Activated B cell treated with CpG ODN at 0.5 μM for 24 hours (primary cell): ENCODE measurements at regions of chr19 and their contacts with region 1.

Region 1: DNA sequence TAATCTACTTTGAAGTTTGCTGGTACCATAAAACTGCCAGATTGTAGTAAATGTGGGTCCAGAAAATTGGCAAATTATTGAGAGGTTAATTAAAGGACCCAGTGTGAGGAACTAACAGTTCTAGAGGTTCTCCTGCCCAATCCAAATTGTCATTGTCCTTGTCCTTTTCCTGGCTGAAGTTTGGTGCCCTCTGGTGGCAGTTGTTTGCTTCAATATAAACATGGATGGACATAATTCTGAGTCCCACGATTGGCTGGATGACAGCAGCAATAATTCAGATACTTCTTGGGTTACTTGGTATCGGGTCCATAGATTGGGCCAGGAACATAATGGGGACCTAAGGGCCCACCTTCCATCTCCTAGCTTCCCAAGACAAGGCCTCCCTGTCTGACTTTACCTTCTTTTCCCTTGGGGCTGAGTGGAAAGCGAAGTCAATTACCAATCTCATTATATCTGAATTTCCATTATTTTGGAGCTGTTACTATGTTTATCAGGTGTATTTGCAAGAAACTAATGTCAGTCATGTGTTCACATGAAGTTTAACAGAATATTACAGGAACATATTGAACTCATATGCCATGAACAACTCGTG is 33.8 kb upstream of the GARRE1 start:
- DNase-seq: peak; percentile 20
- ATAC-seq: no peak
- H3K4me3 Mint-ChIP-seq: no peak overlapping the region
- H3K27ac Mint-ChIP-seq: peak overlapping the region; percentile 50
- H3K4me1 Mint-ChIP-seq: peaks cover 35% of the 10 kb centered on the region
- H3K27me3 Mint-ChIP-seq: no peaks in the 10 kb centered on the region
- CTCF ChIP-seq: peak; percentile 14

Region 2: DNA sequence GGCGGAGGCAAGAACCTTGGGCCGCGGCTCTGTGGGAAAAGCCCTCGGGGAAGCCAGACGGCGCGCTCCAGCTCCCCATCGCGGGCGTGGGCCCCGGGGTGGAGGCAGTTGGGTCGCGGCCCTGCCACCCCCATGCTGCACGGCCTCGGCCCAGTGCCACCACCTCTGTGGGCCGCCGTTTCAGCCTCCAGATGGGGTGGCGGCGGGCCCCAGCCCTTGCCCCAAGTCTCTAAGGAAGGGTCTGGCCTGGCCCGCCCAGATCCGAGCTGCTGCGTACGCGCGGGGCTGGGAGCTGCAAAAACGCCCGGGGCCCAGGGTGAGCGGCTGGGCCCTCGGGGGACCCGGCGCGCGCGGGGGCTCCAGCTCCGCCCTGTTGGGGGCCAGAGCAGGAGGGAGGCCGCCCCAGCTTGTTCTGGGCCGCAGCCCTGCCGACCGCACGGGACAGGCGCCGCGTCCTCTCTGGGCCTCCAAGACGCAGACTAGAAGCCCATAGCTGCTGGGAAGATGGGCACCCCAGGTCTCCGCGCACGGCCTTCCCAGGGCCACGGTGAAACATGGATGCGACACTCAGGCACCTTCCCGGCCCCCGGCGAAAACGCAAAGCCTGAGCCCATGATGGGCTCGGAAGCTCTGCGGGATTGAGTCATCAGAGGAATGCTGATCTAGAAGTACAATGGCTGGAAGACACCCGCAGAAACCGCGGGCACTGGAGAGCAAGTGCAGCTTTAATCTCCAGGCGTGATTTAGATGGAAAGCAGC is 313.8 kb before region 1 on chr19:
- CTCF ChIA-PET with region 1: no interaction called
- POLR2A ChIA-PET with region 1: no interaction called
- intact Hi-C with region 1: no loop called
- DNase-seq: no peak
- ATAC-seq: peak; percentile 31
- H3K4me3 Mint-ChIP-seq: peak overlapping the region; percentile 58
- H3K27ac Mint-ChIP-seq: no peak overlapping the region
- H3K4me1 Mint-ChIP-seq: peaks cover 12% of the 10 kb centered on the region
- H3K27me3 Mint-ChIP-seq: peaks cover 38% of the 10 kb centered on the region
- CTCF ChIP-seq: no peak

Region 3: DNA sequence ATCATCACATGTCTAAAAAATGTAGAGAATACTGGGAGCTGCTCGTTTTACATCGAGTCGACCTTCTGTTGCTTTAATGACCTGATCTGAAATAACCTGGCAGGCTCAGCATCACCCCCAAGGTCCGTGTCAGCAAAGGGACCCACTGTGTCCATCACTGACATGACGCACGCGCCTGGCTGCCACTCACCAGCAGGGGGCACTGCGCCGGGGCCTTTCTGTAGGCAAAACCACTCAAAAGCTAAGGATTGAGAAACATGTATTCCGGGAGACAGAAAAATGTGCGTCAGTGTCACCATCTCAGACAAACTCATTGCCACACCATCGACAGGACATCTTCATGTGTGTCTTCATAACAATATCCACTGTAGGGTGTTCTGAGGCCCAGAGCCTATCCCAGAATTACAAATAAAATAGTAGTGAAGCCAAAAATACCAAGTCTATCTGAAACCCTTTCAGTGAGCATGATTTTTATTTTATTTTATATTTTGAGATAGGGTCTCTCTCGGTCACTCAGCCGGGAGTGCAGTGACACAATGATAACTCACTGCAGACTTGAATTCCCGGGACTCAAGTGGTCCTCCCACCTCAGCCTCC is 178.5 kb before region 1 on chr19:
- CTCF ChIA-PET with region 1: no interaction called
- POLR2A ChIA-PET with region 1: no interaction called
- intact Hi-C with region 1: loop called (anchors 5 kb)
- DNase-seq: peak; percentile 25
- ATAC-seq: no peak
- H3K4me3 Mint-ChIP-seq: no peak overlapping the region
- H3K27ac Mint-ChIP-seq: no peak overlapping the region
- H3K4me1 Mint-ChIP-seq: no peaks in the 10 kb centered on the region
- H3K27me3 Mint-ChIP-seq: peaks cover 17% of the 10 kb centered on the region
- CTCF ChIP-seq: no peak

Region 4: DNA sequence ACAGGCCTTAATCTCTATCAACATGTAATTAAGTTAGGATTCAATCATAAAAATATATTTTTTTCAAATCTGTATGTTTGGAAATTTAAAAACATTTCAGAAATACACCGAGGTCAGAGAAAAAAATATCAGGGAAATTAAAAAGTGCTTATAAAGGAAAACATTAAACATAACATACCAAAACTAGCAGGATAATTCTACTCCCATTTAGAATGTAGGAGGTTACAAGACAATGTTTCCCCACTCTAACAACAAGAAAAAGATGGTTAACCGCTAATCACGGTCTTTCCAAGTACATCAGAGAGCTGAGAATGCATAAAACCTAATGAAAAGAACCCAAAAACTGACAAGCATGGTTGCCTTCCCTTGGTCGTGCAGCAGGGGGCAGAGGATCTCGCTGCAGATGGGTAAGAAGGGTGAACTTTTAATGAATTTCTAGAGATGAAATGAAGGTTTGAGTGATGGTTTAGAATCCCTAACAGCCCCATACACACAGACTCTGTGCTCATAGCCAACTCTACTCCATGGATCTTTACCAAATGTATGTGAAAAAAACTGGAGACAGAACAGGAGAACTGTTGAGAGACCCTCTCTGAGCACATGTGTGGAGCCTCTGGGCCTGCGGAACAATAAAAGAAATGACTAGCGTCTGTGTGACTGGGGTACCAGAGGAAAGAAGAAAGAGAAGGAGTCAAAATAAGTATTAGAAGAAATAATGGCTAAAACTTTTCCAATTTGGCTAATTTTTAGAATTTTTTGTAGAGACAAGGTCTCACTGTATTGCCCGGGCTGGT is 99.5 kb before region 1 on chr19:
- CTCF ChIA-PET with region 1: interaction called, 4 read pairs
- POLR2A ChIA-PET with region 1: no interaction called
- intact Hi-C with region 1: loop called (anchors 1 kb)
- DNase-seq: no peak
- ATAC-seq: peak; percentile 56
- H3K4me3 Mint-ChIP-seq: no peak overlapping the region
- H3K27ac Mint-ChIP-seq: no peak overlapping the region
- H3K4me1 Mint-ChIP-seq: no peaks in the 10 kb centered on the region
- H3K27me3 Mint-ChIP-seq: peaks cover 12% of the 10 kb centered on the region
- CTCF ChIP-seq: no peak

Region 5: DNA sequence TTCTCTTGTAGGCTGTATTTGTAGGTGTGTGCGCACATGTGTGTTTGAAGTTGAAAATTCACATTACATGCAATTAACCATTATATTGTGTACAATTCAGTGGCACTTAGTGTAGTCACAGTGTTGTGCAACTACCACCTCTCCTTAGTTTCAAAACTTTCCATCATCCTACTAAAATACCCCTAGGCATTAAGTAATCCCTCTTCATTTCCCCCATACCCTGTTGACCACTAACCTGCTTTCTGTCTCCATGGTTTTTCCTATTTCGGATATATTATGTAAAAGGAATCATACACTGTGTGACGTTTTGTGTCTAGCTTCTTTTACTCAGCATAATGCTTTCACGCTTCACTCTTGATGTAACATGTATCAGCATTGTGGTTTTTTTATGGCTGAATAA is 32.2 kb before region 1 on chr19:
- CTCF ChIA-PET with region 1: interaction called, 12 read pairs
- POLR2A ChIA-PET with region 1: interaction called, 11 read pairs
- intact Hi-C with region 1: no loop called
- DNase-seq: no peak
- ATAC-seq: no peak
- H3K4me3 Mint-ChIP-seq: no peak overlapping the region
- H3K27ac Mint-ChIP-seq: no peak overlapping the region
- H3K4me1 Mint-ChIP-seq: peaks cover 88% of the 10 kb centered on the region
- H3K27me3 Mint-ChIP-seq: no peaks in the 10 kb centered on the region
- CTCF ChIP-seq: no peak

Region 6: GRCh38 chr19:34193439-34193838 is 27.1 kb before region 1 on chr19:
- CTCF ChIA-PET with region 1: interaction called, 12 read pairs
- POLR2A ChIA-PET with region 1: interaction called, 11 read pairs
- intact Hi-C with region 1: no loop called
- DNase-seq: no peak
- ATAC-seq: peak; percentile 85
- H3K4me3 Mint-ChIP-seq: peak overlapping the region; percentile 66
- H3K27ac Mint-ChIP-seq: peak overlapping the region; percentile 82
- H3K4me1 Mint-ChIP-seq: peaks cover 68% of the 10 kb centered on the region
- H3K27me3 Mint-ChIP-seq: no peaks in the 10 kb centered on the region
- CTCF ChIP-seq: no peak